Activated CD4-positive, alpha-beta T cell treated with anti-CD3 and anti-CD28 coated beads for 36 hours (primary cell): ENCODE measurements at regions of chr9 and their contacts with region 1.

Region 1: GRCh38 chr9:4984621-4985385 is at the start of gene JAK2:
- DNase-seq: peak; percentile 91
- ATAC-seq: peak; percentile 84
- H3K4me3 Mint-ChIP-seq: no peak within 1 kb of the TSS
- H3K27ac Mint-ChIP-seq: peak within 1 kb of the TSS; percentile 94
- H3K4me1 Mint-ChIP-seq: peaks cover 54% of the 10 kb centered on the region
- H3K27me3 Mint-ChIP-seq: no peaks in the 10 kb centered on the region
- total RNA-seq, gene JAK2: 19.4 to 19.5 TPM

Region 2: DNA sequence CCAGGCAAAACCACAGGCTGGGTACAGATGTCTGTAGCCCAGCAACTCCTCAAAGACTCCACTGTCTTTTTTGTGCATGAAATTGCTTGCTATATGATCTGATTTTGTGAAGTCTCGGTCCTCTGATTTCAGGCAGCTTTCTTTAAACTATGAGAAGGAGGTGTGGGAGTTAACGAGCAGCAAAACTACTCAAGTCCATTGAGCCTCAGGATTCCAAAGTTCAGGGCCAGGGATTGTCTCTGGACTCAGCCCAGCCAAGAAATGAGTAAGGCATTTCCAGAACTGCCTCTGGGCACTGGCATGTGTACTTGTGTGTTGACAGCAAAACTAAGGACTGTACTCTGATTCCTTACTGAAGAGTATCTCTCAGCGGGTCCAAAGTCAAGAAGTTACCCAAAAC is 631.6 kb before region 1 on chr9:
- CTCF ChIA-PET with region 1: no interaction called
- POLR2A ChIA-PET with region 1: no interaction called
- intact Hi-C with region 1: no loop called
- DNase-seq: no peak
- ATAC-seq: no peak
- H3K4me3 Mint-ChIP-seq: no peak overlapping the region
- H3K27ac Mint-ChIP-seq: no peak overlapping the region
- H3K4me1 Mint-ChIP-seq: no peaks in the 10 kb centered on the region
- H3K27me3 Mint-ChIP-seq: peaks cover 10% of the 10 kb centered on the region

Region 3: DNA sequence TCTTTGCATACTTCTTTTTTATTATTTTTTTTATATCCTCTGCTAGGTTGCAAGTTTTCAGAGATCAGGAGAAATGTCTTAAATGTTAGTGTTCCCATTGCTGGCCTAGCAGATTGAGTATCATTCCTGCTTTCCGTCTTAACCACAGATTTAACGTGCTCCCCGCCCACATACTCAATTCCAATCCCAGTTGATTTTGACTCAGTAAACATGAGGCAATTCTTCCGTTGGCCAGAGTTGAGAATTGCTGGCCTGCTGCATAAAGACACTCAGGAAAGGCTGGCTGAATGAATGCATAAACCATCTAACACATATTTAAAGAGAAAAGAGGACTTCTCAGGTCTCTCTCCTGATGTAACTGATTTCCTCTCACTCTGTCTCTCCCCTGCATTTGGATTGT is 369.6 kb before region 1 on chr9:
- CTCF ChIA-PET with region 1: no interaction called
- POLR2A ChIA-PET with region 1: no interaction called
- intact Hi-C with region 1: no loop called
- DNase-seq: no peak
- ATAC-seq: no peak
- H3K4me3 Mint-ChIP-seq: no peak overlapping the region
- H3K27ac Mint-ChIP-seq: no peak overlapping the region
- H3K4me1 Mint-ChIP-seq: peaks cover 12% of the 10 kb centered on the region
- H3K27me3 Mint-ChIP-seq: no peaks in the 10 kb centered on the region

Region 4: DNA sequence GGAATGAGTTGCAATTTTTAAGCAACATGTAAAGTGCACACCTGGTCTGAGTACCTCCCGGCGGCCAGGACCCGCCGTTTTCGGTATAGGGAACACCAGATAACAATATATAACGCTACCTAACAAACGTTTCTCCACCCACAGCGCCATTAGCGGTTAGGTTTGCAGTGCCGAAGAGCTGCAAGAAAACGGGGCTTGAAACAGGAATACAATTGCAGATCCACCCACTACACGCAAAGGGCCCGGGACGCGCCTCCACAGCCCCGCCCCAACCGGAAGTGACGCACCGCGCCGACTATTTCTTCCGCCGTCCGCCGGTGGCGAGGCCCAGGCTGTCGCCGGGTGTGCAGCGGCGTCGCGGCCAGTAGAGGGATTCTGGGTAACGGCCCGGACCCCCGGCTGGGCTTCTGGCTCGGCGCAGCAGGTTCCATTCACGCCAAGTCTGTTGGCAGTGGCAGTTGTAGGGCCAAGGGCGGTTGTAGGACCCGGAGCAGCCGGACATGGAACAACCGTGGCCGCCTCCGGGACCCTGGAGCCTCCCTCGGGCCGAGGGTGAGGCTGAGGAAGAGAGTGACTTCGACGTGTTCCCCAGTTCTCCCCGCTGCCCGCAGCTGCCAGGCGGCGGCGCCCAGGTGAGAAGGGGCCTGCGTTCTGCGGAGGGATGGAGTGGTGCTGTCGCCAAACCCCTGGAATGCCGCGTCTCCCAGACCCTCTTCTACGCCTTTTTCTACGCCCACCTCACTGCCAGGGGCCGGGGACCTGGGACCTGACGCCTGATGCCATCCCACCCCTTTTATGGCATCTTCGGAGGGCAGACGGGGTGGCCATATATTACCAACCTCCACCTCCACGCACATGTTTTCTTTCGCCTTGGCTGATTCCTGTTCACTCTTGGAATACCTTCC is 305.3 kb before region 1 on chr9 and contains the start of gene CDC37L1:
- CTCF ChIA-PET with region 1: no interaction called
- POLR2A ChIA-PET with region 1: no interaction called
- intact Hi-C with region 1: loop called in 1 of 2 experiments (anchors 1 kb)
- DNase-seq: peak; percentile 99
- ATAC-seq: peak; percentile 95
- H3K4me3 Mint-ChIP-seq: no peak within 1 kb of the TSS
- H3K27ac Mint-ChIP-seq: no peak within 1 kb of the TSS
- H3K4me1 Mint-ChIP-seq: peaks cover 11% of the 10 kb centered on the region
- H3K27me3 Mint-ChIP-seq: no peaks in the 10 kb centered on the region
- total RNA-seq, gene CDC37L1: 8.0 to 9.8 TPM

Region 5: DNA sequence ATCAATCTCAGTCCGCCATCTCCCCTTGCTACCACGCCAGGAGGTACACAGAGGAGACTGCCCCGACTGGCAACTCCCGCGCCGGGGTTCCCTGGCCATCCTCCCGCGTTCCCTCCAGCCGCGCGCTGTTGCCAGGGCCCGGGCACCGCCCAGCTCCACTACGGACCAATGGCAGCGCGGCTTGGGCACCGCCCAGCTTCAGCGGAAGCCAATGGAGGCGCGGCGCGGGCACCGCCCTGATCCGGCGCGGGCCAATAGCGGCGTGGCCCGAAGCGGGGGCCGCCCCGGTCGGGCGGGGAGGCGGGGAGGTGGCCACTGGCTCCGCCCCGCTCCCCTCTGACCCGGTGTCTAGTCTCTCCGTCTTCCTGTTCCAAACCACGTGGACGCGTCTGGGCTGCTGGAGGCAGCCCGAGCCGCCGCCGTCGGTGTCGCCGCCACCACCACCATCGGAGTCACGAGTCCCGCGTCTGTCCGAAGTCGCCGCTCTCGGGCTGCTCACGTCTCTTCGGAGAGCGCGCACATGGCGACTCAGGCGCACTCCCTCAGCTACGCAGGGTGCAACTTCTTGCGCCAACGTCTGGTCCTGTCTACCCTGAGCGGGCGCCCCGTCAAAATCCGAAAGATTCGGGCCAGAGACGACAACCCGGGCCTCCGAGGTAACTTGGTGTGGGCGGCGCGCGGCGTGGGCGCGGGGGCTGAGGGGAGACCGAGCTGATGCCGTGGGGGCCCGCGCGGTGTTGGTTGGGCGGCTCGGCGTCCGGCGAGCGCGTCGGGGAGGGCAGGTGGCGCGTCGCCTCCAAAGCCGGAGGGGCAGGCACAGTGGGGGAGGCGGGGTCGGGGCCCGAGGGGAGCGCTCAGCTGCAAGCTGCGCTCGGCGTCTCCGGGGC is 192.0 kb before region 1 on chr9 and contains the start of gene RCL1:
- CTCF ChIA-PET with region 1: interaction called, 10 read pairs
- POLR2A ChIA-PET with region 1: interaction called, 5 read pairs
- intact Hi-C with region 1: loop called (anchors 1 kb)
- DNase-seq: peak; percentile 98
- ATAC-seq: peak; percentile 96
- H3K4me3 Mint-ChIP-seq: peak within 1 kb of the TSS; percentile 97
- H3K27ac Mint-ChIP-seq: peak within 1 kb of the TSS; percentile 89
- H3K4me1 Mint-ChIP-seq: peaks cover 44% of the 10 kb centered on the region
- H3K27me3 Mint-ChIP-seq: no peaks in the 10 kb centered on the region
- total RNA-seq, gene RCL1: 27.0 to 36.4 TPM

Region 6: DNA sequence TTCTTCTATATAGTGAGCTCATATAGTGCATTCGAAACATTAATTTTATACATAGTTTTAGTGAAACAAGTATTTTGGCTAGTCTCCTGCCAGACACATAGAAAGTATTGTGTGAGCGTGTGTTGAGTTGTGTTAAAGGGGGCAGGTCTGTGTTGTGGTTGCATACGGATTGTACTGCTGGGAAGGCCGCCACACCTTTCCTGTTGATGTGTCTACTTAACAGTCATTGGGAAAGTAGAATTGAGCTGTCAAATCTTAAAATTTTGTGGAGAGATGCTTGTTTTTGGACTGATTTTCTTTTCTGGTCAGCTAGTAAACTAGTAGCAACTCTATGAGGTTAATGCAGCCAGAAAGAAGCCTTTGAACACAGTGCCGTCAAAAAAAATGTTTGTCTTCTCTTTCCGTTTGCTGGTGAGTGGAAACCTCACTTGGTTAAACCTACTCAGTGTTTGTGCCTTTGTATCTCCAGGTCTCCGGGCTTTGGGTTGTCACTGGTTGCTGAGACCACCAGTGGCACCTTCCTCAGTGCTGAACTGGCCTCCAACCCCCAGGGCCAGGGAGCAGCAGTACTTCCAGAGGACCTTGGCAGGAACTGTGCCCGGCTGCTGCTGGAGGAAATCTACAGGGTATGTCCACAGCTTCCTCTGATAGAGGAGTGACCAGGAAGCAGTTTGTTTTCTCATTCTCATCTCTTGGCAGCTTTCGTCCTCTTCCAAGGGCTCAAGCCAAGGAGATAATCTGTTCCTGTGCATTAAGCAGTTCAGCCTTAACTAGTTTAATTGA is 140.6 kb before region 1 on chr9:
- CTCF ChIA-PET with region 1: no interaction called
- POLR2A ChIA-PET with region 1: no interaction called
- intact Hi-C with region 1: no loop called
- DNase-seq: peak; percentile 15
- ATAC-seq: peak; percentile 33
- H3K4me3 Mint-ChIP-seq: no peak overlapping the region
- H3K27ac Mint-ChIP-seq: peak overlapping the region; percentile 34
- H3K4me1 Mint-ChIP-seq: peaks cover 20% of the 10 kb centered on the region
- H3K27me3 Mint-ChIP-seq: no peaks in the 10 kb centered on the region

Region 7: GRCh38 chr9:4862506-4863250 is 122.1 kb before region 1 on chr9:
- CTCF ChIA-PET with region 1: interaction called, 8 read pairs
- POLR2A ChIA-PET with region 1: no interaction called
- intact Hi-C with region 1: loop called (anchors 5 kb)
- DNase-seq: no peak
- ATAC-seq: no peak
- H3K4me3 Mint-ChIP-seq: no peak overlapping the region
- H3K27ac Mint-ChIP-seq: no peak overlapping the region
- H3K4me1 Mint-ChIP-seq: peaks cover 20% of the 10 kb centered on the region
- H3K27me3 Mint-ChIP-seq: no peaks in the 10 kb centered on the region

Region 8: GRCh38 chr9:4970970-4971641 is 13.7 kb before region 1 on chr9:
- CTCF ChIA-PET with region 1: interaction called, 9 read pairs
- POLR2A ChIA-PET with region 1: interaction called, 6 read pairs
- intact Hi-C with region 1: loop called (anchors 1 kb)
- DNase-seq: peak; percentile 85
- ATAC-seq: peak; percentile 94
- H3K4me3 Mint-ChIP-seq: no peak overlapping the region
- H3K27ac Mint-ChIP-seq: no peak overlapping the region
- H3K4me1 Mint-ChIP-seq: peaks cover 18% of the 10 kb centered on the region
- H3K27me3 Mint-ChIP-seq: no peaks in the 10 kb centered on the region

Region 9: DNA sequence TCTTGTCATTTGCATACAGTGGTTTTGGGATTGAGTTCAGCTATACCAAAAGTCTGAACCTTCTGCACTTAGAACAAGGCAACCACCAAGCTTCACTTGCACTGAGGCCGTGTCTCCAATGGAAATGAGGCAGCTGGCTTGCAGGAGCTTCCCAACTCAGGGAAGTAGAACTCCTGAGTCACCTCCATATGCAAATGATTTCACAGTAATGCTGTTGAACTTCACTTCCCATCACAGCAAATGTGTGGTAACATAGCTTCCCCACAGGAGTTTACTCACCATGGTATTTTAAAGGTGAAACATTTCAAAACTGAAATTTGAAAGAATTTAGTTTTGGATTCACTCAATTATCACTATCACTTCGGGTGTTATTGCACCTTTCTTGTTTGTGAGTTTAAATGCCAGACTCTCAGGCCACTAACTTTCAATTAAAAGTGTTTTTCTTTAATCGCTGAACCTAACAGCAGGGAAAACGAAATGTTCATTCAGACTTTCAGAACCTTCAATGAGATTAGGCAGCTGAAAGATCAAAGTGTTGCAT is 474.6 kb after region 1 on chr9:
- CTCF ChIA-PET with region 1: no interaction called
- POLR2A ChIA-PET with region 1: no interaction called
- intact Hi-C with region 1: loop called (anchors 5 kb)
- DNase-seq: peak; percentile 47
- ATAC-seq: peak; percentile 67
- H3K4me3 Mint-ChIP-seq: peak overlapping the region; percentile 68
- H3K27ac Mint-ChIP-seq: peak overlapping the region; percentile 89
- H3K4me1 Mint-ChIP-seq: peaks cover 80% of the 10 kb centered on the region
- H3K27me3 Mint-ChIP-seq: no peaks in the 10 kb centered on the region

Region 10: GRCh38 chr9:6008169-6008979 is 1023.6 kb after region 1 on chr9:
- CTCF ChIA-PET with region 1: no interaction called
- POLR2A ChIA-PET with region 1: no interaction called
- intact Hi-C with region 1: loop called in 1 of 2 experiments (anchors 10 kb)
- DNase-seq: peak; percentile 96
- ATAC-seq: peak; percentile 77
- H3K4me3 Mint-ChIP-seq: peak overlapping the region; percentile 88
- H3K27ac Mint-ChIP-seq: peak overlapping the region; percentile 84
- H3K4me1 Mint-ChIP-seq: peaks cover 61% of the 10 kb centered on the region
- H3K27me3 Mint-ChIP-seq: no peaks in the 10 kb centered on the region